ENCODE measurements at regions of chr19 and their contacts with region 1.

Region 1: GRCh38 chr19:34345947-34346351 is 19.0 kb upstream of the GPI start:
- DNase-seq: peak; percentile 34 to 74
- ATAC-seq: peak; percentile 81 to 94
- H3K4me3 ChIP-seq: no peak overlapping the region
- H3K27ac ChIP-seq: peak overlapping the region in 2 of 4 donors; percentile 25 to 55
- H3K4me1 ChIP-seq: no peaks in the 10 kb centered on the region
- H3K27me3 ChIP-seq: no peaks in the 10 kb centered on the region
- CTCF ChIP-seq: peak; percentile 68 to 85 (median 74)
- POLR2A ChIP-seq: no peak

Region 2: GRCh38 chr19:34184880-34185491 is 161.0 kb before region 1 on chr19:
- in situ Hi-C with region 1: no loop called
- intact Hi-C with region 1: no loop called
- DNase-seq: no peak
- ATAC-seq: no peak
- H3K4me3 ChIP-seq: no peak overlapping the region
- H3K27ac ChIP-seq: peak overlapping the region in 2 of 4 donors; percentile 2 to 41
- H3K4me1 ChIP-seq: peaks cover 67 to 70% of the 10 kb centered on the region in 2 donors
- H3K27me3 ChIP-seq: no peaks in the 10 kb centered on the region
- CTCF ChIP-seq: no peak
- POLR2A ChIP-seq: no peak

Region 3: DNA sequence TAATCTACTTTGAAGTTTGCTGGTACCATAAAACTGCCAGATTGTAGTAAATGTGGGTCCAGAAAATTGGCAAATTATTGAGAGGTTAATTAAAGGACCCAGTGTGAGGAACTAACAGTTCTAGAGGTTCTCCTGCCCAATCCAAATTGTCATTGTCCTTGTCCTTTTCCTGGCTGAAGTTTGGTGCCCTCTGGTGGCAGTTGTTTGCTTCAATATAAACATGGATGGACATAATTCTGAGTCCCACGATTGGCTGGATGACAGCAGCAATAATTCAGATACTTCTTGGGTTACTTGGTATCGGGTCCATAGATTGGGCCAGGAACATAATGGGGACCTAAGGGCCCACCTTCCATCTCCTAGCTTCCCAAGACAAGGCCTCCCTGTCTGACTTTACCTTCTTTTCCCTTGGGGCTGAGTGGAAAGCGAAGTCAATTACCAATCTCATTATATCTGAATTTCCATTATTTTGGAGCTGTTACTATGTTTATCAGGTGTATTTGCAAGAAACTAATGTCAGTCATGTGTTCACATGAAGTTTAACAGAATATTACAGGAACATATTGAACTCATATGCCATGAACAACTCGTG is 125.4 kb before region 1 on chr19:
- in situ Hi-C with region 1: loop called in 3 of 4 experiments (anchors 10 to 25 kb)
- intact Hi-C with region 1: loop called (anchors 5 kb)
- DNase-seq: peak in 1 of 2 donors; percentile 42
- ATAC-seq: no peak
- H3K4me3 ChIP-seq: no peak overlapping the region
- H3K27ac ChIP-seq: peak overlapping the region in 1 of 4 donors; percentile 8
- H3K4me1 ChIP-seq: peaks cover 9% of the 10 kb centered on the region in 2 donors
- H3K27me3 ChIP-seq: no peaks in the 10 kb centered on the region
- CTCF ChIP-seq: peak; percentile 44 to 70 (median 58)
- POLR2A ChIP-seq: no peak

Region 4: DNA sequence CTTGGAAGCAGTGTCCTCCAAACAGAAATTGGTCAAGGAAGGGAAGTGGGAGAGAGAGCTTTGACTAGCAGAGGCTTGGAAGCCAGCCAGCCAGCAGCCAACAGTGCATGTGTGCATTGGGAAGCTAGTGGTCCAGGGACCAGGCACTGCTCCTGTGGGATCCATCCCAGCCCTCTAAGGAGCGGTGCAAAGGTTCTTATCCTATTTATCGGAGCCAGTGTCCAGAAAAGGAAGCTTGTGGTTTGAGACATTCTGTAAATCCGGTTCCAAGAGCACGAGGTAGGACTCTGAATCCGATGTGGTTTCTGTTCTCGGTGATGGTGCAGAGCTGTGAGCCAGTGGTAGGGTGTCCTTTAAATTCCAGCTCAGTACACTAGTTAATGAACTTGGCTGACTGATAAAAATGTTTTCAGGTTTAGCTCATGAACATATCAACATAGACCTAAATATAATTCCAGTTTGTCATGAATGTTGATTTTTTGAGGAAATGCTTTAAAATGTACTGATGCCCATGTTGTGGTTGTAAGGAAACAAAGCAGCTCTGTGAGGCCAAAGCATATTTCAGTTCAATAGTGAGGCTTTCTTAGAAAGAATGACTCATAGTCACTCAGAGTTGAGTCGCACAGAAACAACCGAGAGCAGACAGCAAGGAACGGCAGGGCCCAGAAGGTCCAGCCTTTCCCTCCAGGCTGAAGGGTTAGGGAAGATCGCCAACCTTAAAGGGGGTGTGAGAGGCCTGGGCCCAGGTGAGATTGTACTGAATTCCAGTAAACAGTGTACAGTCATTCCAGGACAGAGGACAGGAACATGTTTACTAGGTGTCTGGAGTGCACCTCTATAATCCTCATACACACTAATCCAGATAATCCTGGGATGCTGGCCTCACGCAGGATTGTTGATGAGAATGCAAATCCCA is 113.1 kb before region 1 on chr19:
- in situ Hi-C with region 1: loop called in 3 of 4 experiments (anchors 10 to 25 kb)
- intact Hi-C with region 1: no loop called
- DNase-seq: no peak
- ATAC-seq: peak; percentile 64 to 88
- H3K4me3 ChIP-seq: no peak overlapping the region
- H3K27ac ChIP-seq: peak overlapping the region; percentile 23 to 61 (median 55)
- H3K4me1 ChIP-seq: peaks cover 0 to 10% of the 10 kb centered on the region in 2 donors
- H3K27me3 ChIP-seq: no peaks in the 10 kb centered on the region
- CTCF ChIP-seq: no peak
- POLR2A ChIP-seq: no peak

Region 5: DNA sequence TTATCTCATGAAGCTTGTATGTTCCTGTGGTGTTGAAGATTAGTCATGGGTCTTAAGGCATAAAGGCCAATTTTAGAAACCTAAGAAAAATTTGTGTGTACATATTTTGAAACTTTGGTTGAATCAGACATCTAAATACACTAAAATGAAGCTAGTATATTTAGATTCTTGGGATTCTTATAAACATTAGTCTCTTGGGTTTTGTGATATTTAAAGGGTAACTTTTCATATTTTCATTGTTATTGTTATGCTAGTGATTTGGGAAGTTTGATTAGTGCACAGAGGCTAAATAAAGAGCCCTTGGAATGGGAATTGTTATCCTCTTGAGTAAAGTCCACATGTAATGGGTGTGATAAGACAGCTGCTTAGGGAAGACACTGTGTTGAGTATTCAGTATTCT is 106.8 kb after region 1 on chr19:
- in situ Hi-C with region 1: no loop called
- intact Hi-C with region 1: no loop called
- DNase-seq: no peak
- ATAC-seq: no peak
- H3K4me3 ChIP-seq: no peak overlapping the region
- H3K27ac ChIP-seq: peak overlapping the region in 2 of 4 donors; percentile 3 to 45
- H3K4me1 ChIP-seq: peaks cover 5 to 10% of the 10 kb centered on the region in 2 donors
- H3K27me3 ChIP-seq: no peaks in the 10 kb centered on the region
- CTCF ChIP-seq: no peak
- POLR2A ChIP-seq: no peak

Measured in gastrocnemius medialis (tissue), 4 donors.